ENCODE measurements at regions of chr6 and their contacts with region 1.

Region 1: DNA sequence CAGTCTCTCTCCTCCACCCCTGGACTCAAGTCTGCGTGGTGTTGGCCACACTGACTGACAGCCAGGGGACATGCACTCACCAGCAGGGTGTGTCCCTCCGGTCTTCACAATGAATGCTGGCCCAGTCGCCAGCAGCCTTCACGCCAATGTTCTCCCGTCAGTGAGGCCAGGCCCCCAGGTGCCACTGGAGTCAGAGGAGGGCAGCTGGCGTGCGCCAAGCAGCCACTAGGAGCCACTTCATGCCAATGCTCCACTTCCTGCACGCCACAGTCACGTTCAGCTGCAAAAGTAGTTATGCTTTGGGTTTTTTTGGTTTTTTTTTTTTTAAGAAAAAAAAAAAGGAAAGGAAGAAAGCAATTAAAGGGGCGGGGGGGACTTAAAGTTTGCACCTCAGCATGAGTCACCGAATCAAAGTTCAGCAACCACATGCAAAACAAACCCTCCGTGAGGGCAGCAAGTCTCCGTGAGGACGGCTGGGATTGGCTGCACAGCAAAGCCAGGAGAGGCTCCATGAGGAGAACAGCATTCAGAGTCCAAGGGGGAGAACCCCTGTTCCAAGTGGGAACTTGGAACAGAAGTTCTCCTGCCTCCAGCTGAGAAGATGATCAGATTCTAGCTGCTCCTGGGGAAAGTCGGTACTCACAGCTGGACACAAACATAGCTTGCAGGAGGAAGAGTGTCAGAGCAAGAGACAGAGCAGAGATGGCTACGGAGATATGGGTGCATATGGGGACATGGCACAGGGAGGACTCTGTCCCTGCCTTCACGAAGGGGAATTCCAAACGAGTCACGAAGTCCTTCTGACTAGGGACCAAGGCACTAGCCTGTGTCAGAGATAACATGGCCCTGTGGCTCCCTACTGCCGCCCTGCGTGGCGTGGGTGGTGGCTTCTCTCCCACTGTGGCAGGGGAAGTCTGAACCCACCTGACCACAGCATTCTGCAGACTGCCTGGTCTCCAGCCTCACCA is at the start of gene ZC3H12D:
- DNase-seq: peak; percentile 70
- H3K4me3 Mint-ChIP-seq: peak within 1 kb of the TSS; percentile 79
- H3K27ac Mint-ChIP-seq: peak within 1 kb of the TSS; percentile 99
- H3K4me1 Mint-ChIP-seq: peaks cover 53% of the 10 kb centered on the region
- H3K27me3 Mint-ChIP-seq: no peaks in the 10 kb centered on the region
- total RNA-seq, gene ZC3H12D: 15.0 and 15.6 TPM in 2 replicates

Region 2: GRCh38 chr6:149499066-149499465 is 14.0 kb after region 1 on chr6:
- intact Hi-C with region 1: loop called (anchors 1 kb)
- DNase-seq: no peak
- H3K4me3 Mint-ChIP-seq: no peak overlapping the region
- H3K27ac Mint-ChIP-seq: peak overlapping the region; percentile 33
- H3K4me1 Mint-ChIP-seq: peaks cover 48% of the 10 kb centered on the region
- H3K27me3 Mint-ChIP-seq: no peaks in the 10 kb centered on the region

Region 3: DNA sequence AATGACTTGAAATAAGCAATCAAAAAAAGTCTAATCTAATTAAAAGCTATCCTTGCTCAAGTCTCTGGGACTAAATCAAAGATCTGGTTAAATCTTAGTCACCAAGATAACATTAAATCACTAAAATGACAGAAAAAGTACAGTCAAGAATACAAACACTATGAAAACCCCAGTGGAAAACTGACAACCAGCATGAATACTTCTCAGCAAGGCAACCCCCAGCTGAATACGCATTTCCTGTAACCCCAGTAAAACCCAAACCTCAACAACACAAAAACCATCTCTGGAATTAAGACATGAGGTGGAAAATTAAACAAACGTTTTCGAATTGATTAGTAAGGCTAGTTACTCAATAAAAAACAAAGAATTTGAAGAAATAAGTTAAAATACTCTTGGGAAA is 23.5 kb after region 1 on chr6:
- intact Hi-C with region 1: loop called (anchors 1 kb)
- DNase-seq: no peak
- H3K4me3 Mint-ChIP-seq: no peak overlapping the region
- H3K27ac Mint-ChIP-seq: peak overlapping the region; percentile 59
- H3K4me1 Mint-ChIP-seq: peaks cover 27% of the 10 kb centered on the region
- H3K27me3 Mint-ChIP-seq: no peaks in the 10 kb centered on the region

Region 4: GRCh38 chr6:149513915-149514314 is 28.9 kb after region 1 on chr6:
- intact Hi-C with region 1: loop called (anchors 1 kb)
- DNase-seq: no peak
- H3K4me3 Mint-ChIP-seq: no peak overlapping the region
- H3K27ac Mint-ChIP-seq: no peak overlapping the region
- H3K4me1 Mint-ChIP-seq: peaks cover 39% of the 10 kb centered on the region
- H3K27me3 Mint-ChIP-seq: no peaks in the 10 kb centered on the region

Region 5: GRCh38 chr6:149545754-149546528 is 60.9 kb after region 1 on chr6 and contains the start of gene PPIL4:
- intact Hi-C with region 1: loop called (anchors 1 kb)
- DNase-seq: peak; percentile 95
- H3K4me3 Mint-ChIP-seq: peak within 1 kb of the TSS; percentile 96
- H3K27ac Mint-ChIP-seq: peak within 1 kb of the TSS; percentile 97
- H3K4me1 Mint-ChIP-seq: peaks cover 36% of the 10 kb centered on the region
- H3K27me3 Mint-ChIP-seq: peaks cover 6% of the 10 kb centered on the region
- total RNA-seq, gene PPIL4: 20.4 and 20.5 TPM in 2 replicates

Measured in activated T-helper 2 cell treated with anti-CD3 and anti-CD28 coated beads, Interferon-gamma antibody, Interleukin-2, Interleukin-4, amounts not matched to agents 10 μg/mL and 5 μg/mL and 100 μg/mL, durations not matched to agents 14 hours and 24 hours and 36 hours (primary cell).